Breast epithelium (tissue), 4 donors: ENCODE measurements at regions of chrX and their contacts with region 1.

Region 1: DNA sequence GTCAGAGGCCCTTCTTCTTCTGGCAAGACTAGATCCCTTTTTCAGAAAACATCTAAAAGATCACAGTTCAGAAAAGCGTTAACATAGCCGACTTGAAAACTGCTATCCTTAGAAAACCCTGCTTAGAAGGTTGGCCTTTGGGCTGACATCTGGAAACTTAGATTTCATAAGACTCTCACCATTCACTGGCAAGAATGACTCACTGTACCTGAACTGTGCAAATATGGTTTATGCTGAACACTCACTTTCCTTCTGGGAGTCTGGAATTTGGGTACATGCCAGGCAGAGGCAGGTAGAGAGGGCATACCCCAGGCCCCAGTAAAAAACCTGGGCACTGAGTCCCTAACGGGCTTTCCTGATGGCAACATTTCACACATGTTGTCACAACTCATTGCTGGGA is 88.8 kb upstream of the GPC3 start:
- DNase-seq: no peak
- H3K4me3 ChIP-seq: no peak overlapping the region
- H3K27ac ChIP-seq: no peak overlapping the region
- H3K4me1 ChIP-seq: no peaks in the 10 kb centered on the region
- H3K27me3 ChIP-seq: peaks cover 0 to 48% of the 10 kb centered on the region in 2 donors
- CTCF ChIP-seq: no peak
- POLR2A ChIP-seq: no peak

Region 2: GRCh38 chrX:133053861-133054598 is 1020.1 kb before region 1 on chrX:
- intact Hi-C with region 1: loop called (anchors 10 kb)
- DNase-seq: no peak
- H3K4me3 ChIP-seq: no peak overlapping the region
- H3K27ac ChIP-seq: no peak overlapping the region
- H3K4me1 ChIP-seq: no peaks in the 10 kb centered on the region
- H3K27me3 ChIP-seq: peaks cover 0 to 44% of the 10 kb centered on the region in 2 donors
- CTCF ChIP-seq: no peak
- POLR2A ChIP-seq: no peak

Region 3: GRCh38 chrX:134115270-134115669 is 41.1 kb after region 1 on chrX:
- intact Hi-C with region 1: no loop called
- DNase-seq: no peak
- H3K4me3 ChIP-seq: no peak overlapping the region
- H3K27ac ChIP-seq: no peak overlapping the region
- H3K4me1 ChIP-seq: no peaks in the 10 kb centered on the region
- H3K27me3 ChIP-seq: peaks cover 0 to 34% of the 10 kb centered on the region in 2 donors
- CTCF ChIP-seq: no peak
- POLR2A ChIP-seq: no peak

Region 4: GRCh38 chrX:134572816-134573682 is 498.9 kb after region 1 on chrX:
- intact Hi-C with region 1: loop called (anchors 5 kb)
- DNase-seq: no peak
- H3K4me3 ChIP-seq: no peak overlapping the region
- H3K27ac ChIP-seq: no peak overlapping the region
- H3K4me1 ChIP-seq: no peaks in the 10 kb centered on the region
- H3K27me3 ChIP-seq: peaks cover 0 to 54% of the 10 kb centered on the region in 2 donors
- CTCF ChIP-seq: no peak
- POLR2A ChIP-seq: no peak